ENCODE measurements at regions of chr2 and their contacts with region 1.

Region 1: GRCh38 chr2:167140767-167141166 is 252.5 kb downstream of the XIRP2 start:
- DNase-seq: no peak
- ATAC-seq: peak; percentile 74
- H3K4me3 ChIP-seq: no peak overlapping the region
- H3K27ac ChIP-seq: no peak overlapping the region
- H3K4me1 ChIP-seq: peaks cover 0 to 2% of the 10 kb centered on the region in 2 donors
- H3K27me3 ChIP-seq: no peaks in the 10 kb centered on the region

Region 2: DNA sequence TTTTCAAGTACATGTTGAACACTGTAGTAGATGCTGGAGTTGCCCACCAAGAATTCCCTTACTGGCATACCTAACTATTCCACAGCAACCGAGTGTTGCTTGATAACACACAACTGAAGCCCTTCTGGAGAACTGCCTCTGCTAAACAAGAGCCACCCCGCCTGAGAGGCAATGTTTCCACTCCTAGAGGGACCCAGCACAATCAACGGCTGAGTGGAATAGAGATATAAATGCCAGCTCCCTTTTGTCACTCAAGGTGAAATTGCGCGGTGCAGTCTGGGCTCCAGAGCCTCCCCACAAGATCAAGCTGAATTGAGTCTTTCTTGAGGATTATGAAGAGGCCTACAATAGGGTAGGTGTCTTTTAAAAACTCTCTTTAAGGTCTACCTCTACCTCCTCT is 715.9 kb before region 1 on chr2:
- intact Hi-C with region 1: no loop called
- DNase-seq: no peak
- ATAC-seq: peak; percentile 15
- H3K4me3 ChIP-seq: no peak overlapping the region
- H3K27ac ChIP-seq: no peak overlapping the region
- H3K4me1 ChIP-seq: no peaks in the 10 kb centered on the region
- H3K27me3 ChIP-seq: no peaks in the 10 kb centered on the region

Region 3: GRCh38 chr2:166700079-166700478 is 440.7 kb before region 1 on chr2:
- intact Hi-C with region 1: no loop called
- DNase-seq: no peak
- ATAC-seq: no peak
- H3K4me3 ChIP-seq: no peak overlapping the region
- H3K27ac ChIP-seq: no peak overlapping the region
- H3K4me1 ChIP-seq: no peaks in the 10 kb centered on the region
- H3K27me3 ChIP-seq: no peaks in the 10 kb centered on the region

Region 4: GRCh38 chr2:167190053-167190452 is 49.3 kb after region 1 on chr2:
- intact Hi-C with region 1: loop called (anchors 5 kb)
- DNase-seq: peak in 1 of 2 donors; percentile 50
- ATAC-seq: peak; percentile 59
- H3K4me3 ChIP-seq: no peak overlapping the region
- H3K27ac ChIP-seq: no peak overlapping the region
- H3K4me1 ChIP-seq: peaks cover 4 to 21% of the 10 kb centered on the region in 2 donors
- H3K27me3 ChIP-seq: no peaks in the 10 kb centered on the region